ENCODE measurements at regions of chr4 and their contacts with region 1.

Region 1: GRCh38 chr4:87926554-87927098 is 48.9 kb upstream of the SPP1 start:
- DNase-seq: no peak
- H3K4me3 ChIP-seq: no peak overlapping the region
- H3K27ac ChIP-seq: no peak overlapping the region
- H3K4me1 ChIP-seq: no peaks in the 10 kb centered on the region
- H3K27me3 ChIP-seq: no peaks in the 10 kb centered on the region
- CTCF ChIP-seq: no peak
- POLR2A ChIP-seq: no peak

Region 2: GRCh38 chr4:87559109-87559837 is 367.4 kb before region 1 on chr4:
- intact Hi-C with region 1: no loop called
- DNase-seq: peak in 2 of 7 donors; percentile 1 to 59
- H3K4me3 ChIP-seq: no peak overlapping the region
- H3K27ac ChIP-seq: no peak overlapping the region
- H3K4me1 ChIP-seq: no peaks in the 10 kb centered on the region
- H3K27me3 ChIP-seq: no peaks in the 10 kb centered on the region
- CTCF ChIP-seq: no peak
- POLR2A ChIP-seq: no peak

Region 3: DNA sequence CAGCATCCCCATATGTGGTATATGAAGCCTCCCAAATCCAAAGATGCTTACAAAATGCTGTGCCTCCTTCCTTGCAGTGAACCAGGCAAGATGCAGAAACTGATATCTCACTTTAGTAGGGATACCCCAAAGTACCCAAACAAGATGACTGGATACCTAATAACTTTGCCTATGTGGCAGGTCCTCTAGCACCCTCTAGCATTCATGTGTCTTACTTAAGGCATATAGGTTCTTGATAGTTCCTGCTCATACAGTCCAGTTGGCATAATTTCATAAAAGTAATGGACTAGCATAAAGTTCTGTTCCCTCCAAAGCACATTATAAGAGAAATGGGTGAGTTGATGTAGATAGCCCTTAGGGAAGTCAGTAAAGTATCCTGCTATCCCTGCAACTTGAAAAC is 12.1 kb after region 1 on chr4:
- intact Hi-C with region 1: loop called in 1 of 2 experiments (anchors 1 kb)
- DNase-seq: no peak
- H3K4me3 ChIP-seq: no peak overlapping the region
- H3K27ac ChIP-seq: no peak overlapping the region
- H3K4me1 ChIP-seq: no peaks in the 10 kb centered on the region
- H3K27me3 ChIP-seq: no peaks in the 10 kb centered on the region
- CTCF ChIP-seq: no peak
- POLR2A ChIP-seq: no peak

Region 4: DNA sequence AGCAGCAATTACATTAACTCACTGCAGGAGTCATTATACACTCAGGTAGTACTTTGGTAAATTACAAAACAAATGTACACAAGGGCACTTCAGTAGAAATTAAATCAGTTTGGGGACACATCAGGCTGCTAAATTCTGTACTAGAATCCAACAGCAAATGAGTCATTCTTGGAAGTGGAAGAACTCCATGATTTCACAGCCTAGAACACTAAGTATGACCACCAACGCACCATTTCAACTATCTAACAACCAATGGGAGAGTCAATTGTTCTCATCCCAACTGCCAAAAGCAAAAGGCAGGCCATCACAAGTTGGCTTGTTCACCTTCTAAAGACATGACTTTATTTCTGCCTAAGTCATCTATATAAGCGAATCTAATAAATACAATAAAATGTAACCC is 331.1 kb after region 1 on chr4:
- intact Hi-C with region 1: no loop called
- DNase-seq: no peak
- H3K4me3 ChIP-seq: no peak overlapping the region
- H3K27ac ChIP-seq: no peak overlapping the region
- H3K4me1 ChIP-seq: no peaks in the 10 kb centered on the region
- H3K27me3 ChIP-seq: no peaks in the 10 kb centered on the region
- CTCF ChIP-seq: no peak
- POLR2A ChIP-seq: no peak